Dorsolateral prefrontal cortex (tissue), 120 donors: ENCODE measurements at regions of chr19 and their contacts with region 1.

Region 1: DNA sequence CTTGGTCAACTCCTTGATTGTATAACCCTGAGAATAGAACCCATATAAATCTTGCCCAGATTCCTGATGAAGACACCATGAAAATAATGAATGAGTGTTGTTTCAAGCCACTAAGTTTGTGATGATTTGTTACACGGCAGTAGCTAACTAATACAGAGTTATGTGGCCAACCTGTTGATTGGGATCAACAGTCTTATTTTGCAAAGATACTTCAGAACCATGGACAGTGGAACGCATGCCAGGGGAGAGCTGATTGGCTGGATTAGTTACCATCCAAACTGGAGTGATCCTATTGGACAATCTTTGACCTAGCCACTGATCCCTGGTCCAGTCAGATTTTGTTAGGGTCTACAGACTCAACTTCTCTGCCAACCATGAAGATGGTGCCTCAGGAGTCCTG is 26.6 kb downstream of the CD70 start:
- DNase-seq: no peak
- H3K4me3 ChIP-seq: no peak overlapping the region
- H3K27ac ChIP-seq: no peak overlapping the region
- H3K27me3 ChIP-seq: peaks cover 0 to 6% (median 0%) of the 10 kb centered on the region in 45 donors
- CTCF ChIP-seq: no peak

Region 2: DNA sequence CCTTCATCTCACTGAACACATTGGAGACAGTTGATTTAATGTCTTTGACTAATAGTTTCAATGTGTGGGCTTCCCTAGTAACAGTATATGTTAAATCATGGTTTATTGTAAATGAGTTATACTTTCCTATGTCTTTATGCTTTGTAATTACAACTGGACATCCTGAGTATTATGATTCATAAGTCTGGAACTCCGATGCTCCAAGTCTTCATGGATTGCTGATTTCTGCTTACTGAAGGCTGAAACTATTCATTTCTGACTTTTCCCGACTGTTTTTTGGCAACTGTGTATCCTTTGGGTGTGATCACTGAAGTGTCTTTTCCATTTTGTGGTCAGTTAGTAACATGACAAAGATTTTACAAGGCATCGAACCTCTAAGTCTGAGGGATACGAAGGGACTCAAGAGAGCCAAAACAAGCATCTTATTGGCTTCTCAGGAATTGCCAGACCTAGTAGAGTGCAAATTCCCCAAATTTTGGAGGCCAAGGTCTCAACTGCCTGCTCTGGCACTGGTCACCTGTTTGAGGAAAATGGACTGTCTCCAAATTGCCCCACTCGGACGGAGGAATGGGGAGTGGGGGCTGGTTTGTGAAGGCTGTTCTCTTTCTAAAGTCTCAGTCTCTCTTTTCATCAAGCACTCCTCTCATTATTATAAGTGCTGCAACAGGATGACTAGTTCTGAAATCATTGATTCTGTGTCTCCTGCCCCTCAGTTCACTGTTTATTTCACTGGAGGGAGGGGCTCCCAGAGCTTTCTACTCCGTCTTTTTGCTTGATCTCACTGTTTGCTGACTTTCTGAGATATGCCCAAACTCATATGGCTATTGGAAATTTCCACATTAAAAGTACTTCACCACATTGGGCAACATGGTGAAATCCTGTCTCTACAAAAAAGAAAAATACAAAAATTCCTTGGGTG is 46.8 kb after region 1 on chr19:
- intact Hi-C with region 1: loop called in 1 of 2 experiments (anchors 10 kb)
- DNase-seq: no peak
- H3K4me3 ChIP-seq: no peak overlapping the region
- H3K27ac ChIP-seq: no peak overlapping the region
- H3K27me3 ChIP-seq: peaks cover 0 to 33% (median 7%) of the 10 kb centered on the region in 45 donors
- CTCF ChIP-seq: no peak